ENCODE measurements at regions of chr1 and their contacts with region 1.

Region 1: DNA sequence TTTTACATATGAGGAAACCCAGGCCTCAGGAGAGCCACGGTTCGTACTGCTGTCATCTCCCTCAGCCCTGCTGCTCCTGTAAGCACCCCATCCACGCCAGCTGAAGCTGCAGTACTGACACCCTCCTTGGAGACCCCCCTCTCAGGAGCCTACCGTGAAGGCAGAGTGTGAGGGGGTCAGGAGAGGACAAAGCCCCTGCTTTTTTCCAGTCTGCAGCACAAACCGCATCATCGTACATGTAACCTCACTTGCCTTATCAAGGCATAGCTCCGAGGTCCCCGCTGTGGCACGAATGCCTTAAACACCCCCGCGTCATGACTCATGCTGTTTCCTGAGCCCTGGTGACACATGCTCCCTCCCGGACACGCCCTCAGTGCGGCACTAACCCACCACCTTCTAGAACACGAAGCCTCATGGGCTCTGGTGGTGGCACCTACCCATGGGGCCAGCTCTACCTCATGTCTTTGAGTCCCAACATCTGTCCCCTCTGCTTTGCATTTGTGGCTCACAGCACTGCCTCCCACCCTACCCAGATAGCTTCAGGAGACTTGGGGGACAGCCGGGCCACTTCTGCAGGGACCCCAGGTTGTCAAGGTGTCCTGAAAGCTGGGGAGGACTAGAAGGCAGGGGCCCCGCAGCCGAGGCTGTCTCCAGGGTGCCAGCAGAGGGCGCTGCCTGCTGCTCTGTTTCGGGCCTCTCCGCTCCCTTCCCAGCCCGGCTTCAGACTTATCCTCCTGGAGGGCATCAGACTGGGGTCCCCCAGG is 4.9 kb downstream of the SH3BGRL3 start:
- DNase-seq: peak; percentile 82 to 98 (median 94)
- ATAC-seq: peak; percentile 72
- H3K4me3 ChIP-seq: peak overlapping the region; percentile 27 to 28
- H3K4me3 Mint-ChIP-seq: peak overlapping the region; percentile 82
- H3K27ac ChIP-seq: peak overlapping the region; percentile 61 to 76
- H3K27ac Mint-ChIP-seq: peak overlapping the region; percentile 100
- H3K4me1 ChIP-seq: peaks cover 93% of the 10 kb centered on the region
- H3K4me1 Mint-ChIP-seq: peaks cover 92% of the 10 kb centered on the region
- H3K27me3 ChIP-seq: no peaks in the 10 kb centered on the region
- H3K27me3 Mint-ChIP-seq: no peaks in the 10 kb centered on the region
- CTCF ChIP-seq: peak; percentile 46

Region 2: DNA sequence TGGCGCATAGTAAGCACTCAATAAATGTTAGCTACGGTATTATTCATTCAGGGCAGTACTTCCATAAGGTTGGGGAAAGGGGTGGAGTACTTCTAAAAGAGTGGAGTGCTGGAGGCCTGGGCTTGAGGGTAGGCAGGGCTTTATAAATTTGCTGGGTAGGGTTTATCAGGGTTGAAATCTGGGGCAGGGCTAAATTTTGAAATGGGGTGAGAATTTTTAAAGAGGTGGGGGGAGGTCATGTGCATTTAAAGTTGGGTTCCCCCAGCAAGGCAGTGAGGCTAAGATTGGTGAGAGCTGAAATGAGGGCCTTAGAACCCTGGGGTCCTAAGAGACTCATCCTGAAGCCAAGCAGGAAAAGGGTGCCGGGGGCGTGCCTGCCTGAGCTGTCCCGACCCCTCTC is 84.4 kb before region 1 on chr1:
- CTCF ChIA-PET with region 1: no interaction called
- POLR2A ChIA-PET with region 1: no interaction called
- intact Hi-C with region 1: no loop called
- DNase-seq: no peak
- ATAC-seq: no peak
- H3K4me3 ChIP-seq: no peak overlapping the region
- H3K4me3 Mint-ChIP-seq: no peak overlapping the region
- H3K27ac ChIP-seq: no peak overlapping the region
- H3K27ac Mint-ChIP-seq: no peak overlapping the region
- H3K4me1 ChIP-seq: peaks cover 21% of the 10 kb centered on the region
- H3K4me1 Mint-ChIP-seq: peaks cover 25% of the 10 kb centered on the region
- H3K27me3 ChIP-seq: no peaks in the 10 kb centered on the region
- H3K27me3 Mint-ChIP-seq: peaks cover 2% of the 10 kb centered on the region
- CTCF ChIP-seq: no peak

Region 3: GRCh38 chr1:26296340-26297056 is 11.7 kb after region 1 on chr1:
- CTCF ChIA-PET with region 1: interaction called, 11 read pairs
- POLR2A ChIA-PET with region 1: interaction called, 9 read pairs
- intact Hi-C with region 1: no loop called
- DNase-seq: no peak
- ATAC-seq: no peak
- H3K4me3 ChIP-seq: no peak overlapping the region
- H3K4me3 Mint-ChIP-seq: no peak overlapping the region
- H3K27ac ChIP-seq: no peak overlapping the region
- H3K27ac Mint-ChIP-seq: no peak overlapping the region
- H3K4me1 ChIP-seq: peaks cover 16% of the 10 kb centered on the region
- H3K4me1 Mint-ChIP-seq: peaks cover 29% of the 10 kb centered on the region
- H3K27me3 ChIP-seq: no peaks in the 10 kb centered on the region
- H3K27me3 Mint-ChIP-seq: no peaks in the 10 kb centered on the region
- CTCF ChIP-seq: no peak

Region 4: DNA sequence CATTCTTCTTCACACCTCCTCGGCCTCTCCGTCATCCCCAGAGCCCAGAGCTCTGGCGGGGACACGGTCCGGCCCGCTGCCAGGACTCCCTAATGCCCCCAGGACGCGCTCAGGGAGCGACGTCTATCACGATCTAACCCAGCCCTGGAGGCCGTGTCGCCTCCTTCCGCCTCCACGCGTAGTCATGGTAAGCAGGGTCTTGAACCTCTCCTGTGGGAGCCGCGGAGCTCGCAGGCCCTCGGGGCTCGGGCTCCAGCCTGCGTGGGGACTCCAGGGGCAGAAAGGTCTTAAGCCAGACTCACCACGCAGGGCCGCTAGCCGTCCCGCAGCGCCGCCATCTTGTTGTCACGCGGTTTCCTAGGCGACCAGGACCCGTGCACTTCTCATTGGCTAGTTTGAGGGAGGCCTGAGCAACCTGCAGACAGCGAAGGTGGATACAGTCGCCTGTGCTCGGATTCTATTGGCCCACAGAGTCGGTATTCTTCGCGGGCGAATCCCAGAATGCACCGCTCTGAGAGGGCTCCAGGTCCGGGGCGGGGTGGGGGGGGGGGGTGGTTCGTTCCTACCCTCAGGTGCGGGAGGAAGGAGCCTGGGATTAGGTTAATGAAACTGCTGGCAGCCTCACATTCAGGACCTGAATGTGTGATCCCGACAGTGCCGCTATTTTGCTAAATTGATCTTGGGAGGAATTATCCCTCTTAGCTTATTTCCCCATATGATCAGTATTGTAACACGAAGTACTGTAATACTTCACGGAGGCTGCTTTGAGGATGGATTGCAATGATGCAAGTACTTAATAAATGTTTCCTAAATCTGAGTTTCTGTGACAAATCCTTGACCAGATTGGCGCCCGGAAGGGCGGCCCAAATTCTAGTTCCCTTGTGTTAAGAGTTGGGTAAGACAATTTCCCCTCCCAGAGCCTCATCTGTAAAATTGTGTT is 21.8 kb after region 1 on chr1 and contains the start of gene UBXN11:
- CTCF ChIA-PET with region 1: interaction called, 17 read pairs
- POLR2A ChIA-PET with region 1: interaction called, 112 read pairs
- intact Hi-C with region 1: loop called (anchors 1 kb)
- DNase-seq: peak; percentile 82 to 97 (median 92)
- ATAC-seq: peak; percentile 99
- H3K4me3 ChIP-seq: peak within 1 kb of the TSS; percentile 84 to 91
- H3K4me3 Mint-ChIP-seq: peak within 1 kb of the TSS; percentile 99
- H3K27ac ChIP-seq: peak within 1 kb of the TSS; percentile 73 to 83
- H3K27ac Mint-ChIP-seq: peak within 1 kb of the TSS; percentile 95
- H3K4me1 ChIP-seq: peaks cover 30% of the 10 kb centered on the region
- H3K4me1 Mint-ChIP-seq: peaks cover 31% of the 10 kb centered on the region
- H3K27me3 ChIP-seq: no peaks in the 10 kb centered on the region
- H3K27me3 Mint-ChIP-seq: no peaks in the 10 kb centered on the region
- CTCF ChIP-seq: no peak
- total RNA-seq, gene UBXN11: 28.6 to 33.8 TPM

Region 5: DNA sequence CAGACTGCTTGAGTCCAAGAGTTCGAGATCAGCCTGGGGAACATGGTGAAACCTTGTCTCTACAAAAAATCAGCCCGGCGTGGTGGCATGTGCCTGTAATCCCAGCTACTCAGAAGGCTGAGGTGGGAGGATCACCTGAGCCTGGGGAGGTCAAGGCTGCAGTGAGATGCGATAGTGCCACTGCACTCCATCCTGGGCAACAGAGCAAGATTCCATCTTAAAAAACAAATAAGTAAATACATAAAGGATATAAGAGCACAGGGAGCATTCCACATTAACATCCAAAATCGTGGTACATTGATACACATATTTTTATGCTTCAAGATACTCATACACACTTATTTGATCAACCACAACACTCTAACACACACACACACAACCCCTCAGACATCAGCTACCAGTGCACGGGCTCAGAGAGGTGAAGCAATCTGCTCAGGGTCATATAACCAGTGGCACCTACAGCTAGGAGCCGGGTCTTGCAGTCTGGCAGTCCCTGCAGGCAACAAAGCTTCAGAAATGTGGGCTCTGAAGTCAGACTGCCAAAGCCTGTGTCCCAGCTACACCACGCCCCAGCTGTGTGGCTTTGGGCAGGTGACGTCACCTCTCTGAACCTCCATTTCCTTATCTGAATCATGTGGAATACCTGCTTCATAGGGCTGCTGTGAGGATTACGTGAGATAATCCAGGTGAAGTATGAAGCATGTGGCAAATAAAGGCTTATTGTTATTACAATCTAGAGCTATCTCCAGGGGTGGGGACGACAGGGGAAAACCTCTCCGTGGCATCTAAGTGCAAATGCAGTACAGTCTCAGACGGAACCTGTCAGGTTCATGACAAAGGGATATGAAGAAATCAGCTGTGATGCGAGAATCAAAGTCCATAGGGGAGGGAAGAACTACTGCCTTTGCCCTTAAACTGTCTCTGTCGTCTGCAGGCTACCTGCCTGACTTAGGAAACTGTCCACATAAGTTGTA is 73.9 kb after region 1 on chr1:
- CTCF ChIA-PET with region 1: interaction called, 106 read pairs
- POLR2A ChIA-PET with region 1: interaction called, 3 read pairs
- intact Hi-C with region 1: loop called (anchors 2 kb)
- DNase-seq: peak; percentile 52 to 90 (median 72)
- ATAC-seq: peak; percentile 81
- H3K4me3 ChIP-seq: no peak overlapping the region
- H3K4me3 Mint-ChIP-seq: peak overlapping the region; percentile 42
- H3K27ac ChIP-seq: no peak overlapping the region
- H3K27ac Mint-ChIP-seq: peak overlapping the region; percentile 84
- H3K4me1 ChIP-seq: peaks cover 36% of the 10 kb centered on the region
- H3K4me1 Mint-ChIP-seq: peaks cover 40% of the 10 kb centered on the region
- H3K27me3 ChIP-seq: peaks cover 0 to 18% of the 10 kb centered on the region in 2 experiments
- H3K27me3 Mint-ChIP-seq: peaks cover 13% of the 10 kb centered on the region
- CTCF ChIP-seq: no peak